Gastrocnemius medialis (tissue), 4 donors: ENCODE measurements at regions of chr15 and their contacts with region 1.

Region 1: GRCh38 chr15:40044717-40045571 is 6.0 kb upstream of the SRP14 start:
- DNase-seq: peak; percentile 79 to 84
- ATAC-seq: peak; percentile 80 to 87
- H3K4me3 ChIP-seq: peak overlapping the region in 2 of 4 donors; percentile 19 to 26
- H3K27ac ChIP-seq: peak overlapping the region; percentile 30 to 60 (median 49)
- H3K4me1 ChIP-seq: peaks cover 13 to 30% of the 10 kb centered on the region in 2 donors
- H3K27me3 ChIP-seq: no peaks in the 10 kb centered on the region
- CTCF ChIP-seq: peak; percentile 86 to 98 (median 91)
- POLR2A ChIP-seq: no peak

Region 2: GRCh38 chr15:40160689-40161688 is 116.0 kb after region 1 on chr15 and contains the start of gene BUB1B:
- in situ Hi-C with region 1: loop called in 2 of 4 experiments (anchors 10 kb)
- intact Hi-C with region 1: loop called (anchors 2 kb)
- DNase-seq: peak; percentile 86 to 90
- ATAC-seq: peak; percentile 99
- H3K4me3 ChIP-seq: peak within 1 kb of the TSS; percentile 61 to 75 (median 65)
- H3K27ac ChIP-seq: peak within 1 kb of the TSS in 1 of 4 donors; percentile 4
- H3K4me1 ChIP-seq: peaks cover 8 to 11% of the 10 kb centered on the region in 2 donors
- H3K27me3 ChIP-seq: no peaks in the 10 kb centered on the region
- CTCF ChIP-seq: no peak
- POLR2A ChIP-seq: no peak
- total RNA-seq, gene BUB1B: 0.51 to 1.8 TPM in 2 of 4 donors, not detected in the others

Region 3: DNA sequence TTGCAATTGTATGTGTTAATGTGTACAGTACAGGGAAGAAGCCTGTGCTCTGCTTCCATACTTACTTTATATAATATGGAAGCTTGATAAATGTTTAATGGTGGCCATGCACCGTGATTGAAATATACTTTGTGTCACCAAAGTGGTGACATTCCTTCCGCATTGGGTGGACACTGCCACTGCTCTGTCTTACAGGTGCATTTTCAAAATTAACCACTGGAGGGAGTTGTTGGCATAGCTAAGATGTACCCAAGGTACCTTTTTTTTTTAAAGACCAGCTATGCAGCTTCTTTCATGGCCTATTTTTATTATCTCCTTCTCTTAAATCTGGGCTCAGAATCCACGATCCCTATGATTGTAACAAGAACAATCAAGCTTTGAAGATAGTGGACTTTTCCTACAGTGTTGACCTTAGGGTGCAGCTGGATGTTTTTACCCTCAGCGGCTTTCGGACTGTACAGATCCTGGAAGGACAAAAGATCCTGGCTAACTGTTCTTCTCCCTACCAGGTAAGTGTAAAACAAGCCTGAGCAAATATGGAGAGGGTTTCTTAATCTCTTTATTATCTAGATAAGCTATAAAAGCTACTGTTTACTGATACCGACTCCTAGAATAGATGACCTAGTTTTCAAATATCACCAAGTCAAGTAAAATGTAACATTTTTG is 172.3 kb after region 1 on chr15:
- in situ Hi-C with region 1: loop called in 1 of 4 experiments (anchors 10 kb)
- intact Hi-C with region 1: loop called (anchors 2 kb)
- DNase-seq: no peak
- ATAC-seq: peak; percentile 89 to 99
- H3K4me3 ChIP-seq: no peak overlapping the region
- H3K27ac ChIP-seq: no peak overlapping the region
- H3K4me1 ChIP-seq: no peaks in the 10 kb centered on the region
- H3K27me3 ChIP-seq: no peaks in the 10 kb centered on the region
- CTCF ChIP-seq: peak; percentile 69 to 86 (median 80)
- POLR2A ChIP-seq: no peak

Region 4: DNA sequence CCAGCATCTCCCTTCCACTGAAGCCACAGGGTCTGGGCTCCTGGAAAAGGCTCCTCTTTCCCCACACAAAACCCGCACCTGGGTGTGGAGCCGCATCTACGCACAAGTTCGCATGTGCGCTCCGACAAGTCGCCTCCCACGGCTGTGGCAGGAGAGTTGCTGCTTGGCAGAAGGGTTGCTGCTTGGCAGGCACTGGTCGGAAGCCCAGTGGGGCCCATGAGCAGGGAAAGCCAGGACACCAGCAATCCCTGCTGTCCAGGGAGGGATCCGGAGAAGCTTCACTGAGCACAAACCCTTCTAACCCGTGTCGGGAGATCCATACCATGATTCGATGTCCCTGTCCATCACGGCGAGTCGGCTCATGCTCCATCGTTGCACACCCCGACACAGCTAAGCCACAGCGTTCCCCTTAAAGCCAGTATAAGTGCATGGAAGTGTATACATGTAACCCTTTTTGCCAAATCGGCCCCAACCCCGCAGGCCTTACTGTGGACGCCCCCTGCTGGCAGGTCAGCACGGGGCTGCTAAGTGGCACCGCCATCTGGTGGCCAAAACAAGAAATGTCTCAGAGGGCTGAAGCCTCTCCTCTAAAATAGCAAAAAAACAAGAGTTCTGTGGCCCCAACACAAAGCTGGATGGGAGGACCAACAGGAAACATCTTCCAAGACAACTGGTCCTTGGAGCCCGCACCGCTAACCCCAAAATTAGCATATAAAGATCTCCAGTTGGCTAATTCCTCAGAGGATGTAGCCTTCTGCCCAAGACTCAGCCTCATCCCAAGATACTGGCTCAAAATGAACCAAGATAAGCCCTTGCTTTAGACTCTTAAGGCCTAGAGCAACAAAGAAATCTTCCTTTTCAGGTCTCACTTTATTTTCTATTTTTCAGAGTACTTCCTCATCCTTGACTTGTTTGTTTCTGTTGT is 229.7 kb after region 1 on chr15:
- in situ Hi-C with region 1: loop called in 3 of 4 experiments (anchors 5 to 10 kb)
- intact Hi-C with region 1: loop called (anchors 1 kb)
- DNase-seq: peak; percentile 36 to 64
- ATAC-seq: peak; percentile 75 to 76
- H3K4me3 ChIP-seq: no peak overlapping the region
- H3K27ac ChIP-seq: no peak overlapping the region
- H3K4me1 ChIP-seq: peaks cover 2% of the 10 kb centered on the region in 2 donors
- H3K27me3 ChIP-seq: peaks cover 7 to 15% (median 10%) of the 10 kb centered on the region in 3 donors
- CTCF ChIP-seq: peak; percentile 99 to 100 (median 100)
- POLR2A ChIP-seq: no peak

Region 5: GRCh38 chr15:40405501-40406381 is 360.8 kb after region 1 on chr15 and contains the start of gene IVD:
- in situ Hi-C with region 1: loop called in 1 of 4 experiments (anchors 25 kb)
- intact Hi-C with region 1: loop called (anchors 10 kb)
- DNase-seq: peak; percentile 90 to 94
- ATAC-seq: peak; percentile 93 to 97
- H3K4me3 ChIP-seq: peak within 1 kb of the TSS; percentile 64 to 87 (median 73)
- H3K27ac ChIP-seq: peak within 1 kb of the TSS; percentile 74 to 81 (median 75)
- H3K4me1 ChIP-seq: peaks cover 8 to 11% of the 10 kb centered on the region in 2 donors
- H3K27me3 ChIP-seq: no peaks in the 10 kb centered on the region
- CTCF ChIP-seq: no peak
- POLR2A ChIP-seq: peak; percentile 41 to 45
- total RNA-seq, gene IVD: 27.4 to 34.1 (median 29.1) TPM